ENCODE measurements at regions of chr5 and their contacts with region 1.

Region 1: DNA sequence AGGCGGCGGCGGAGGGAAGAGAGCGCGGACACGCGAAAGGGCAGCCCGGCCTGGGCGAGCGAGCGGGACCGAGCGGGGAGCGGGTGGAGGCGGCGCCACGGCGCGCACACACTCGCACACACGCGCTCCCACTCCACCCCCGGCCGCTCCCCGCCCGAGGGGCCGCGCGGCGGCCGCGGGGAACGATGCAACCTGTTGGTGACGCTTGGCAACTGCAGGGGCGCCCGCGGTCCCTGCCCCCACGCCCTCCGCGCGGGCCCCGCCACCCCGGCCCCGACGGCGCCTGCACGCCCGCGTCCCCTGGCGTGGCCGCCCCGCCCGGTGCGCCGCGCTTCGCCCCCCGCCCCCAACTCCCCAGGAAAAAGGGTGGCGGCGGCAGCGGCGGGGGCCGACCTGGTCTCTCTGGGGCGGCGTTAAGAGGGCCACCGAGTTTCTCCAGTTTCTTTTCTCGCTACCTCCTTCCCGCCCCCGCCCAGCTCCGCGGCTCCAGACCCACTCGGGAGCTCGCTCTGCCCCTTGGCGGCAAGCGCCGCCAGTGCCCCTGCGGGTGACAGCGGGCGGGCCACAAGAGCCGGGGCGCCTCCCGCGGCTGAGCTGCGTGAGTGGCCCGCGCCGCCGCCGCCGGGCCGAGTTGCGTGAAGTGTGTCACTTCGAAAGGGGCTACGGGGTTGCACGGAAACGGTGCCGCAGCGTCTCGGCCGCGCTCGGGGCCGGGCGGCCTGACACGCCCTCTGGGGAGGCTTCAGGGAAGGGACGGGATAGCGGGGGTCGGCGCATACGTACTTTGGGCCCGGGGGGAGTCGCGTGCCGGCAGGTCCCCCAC is at the start of gene NR3C1:
- DNase-seq: peak; percentile 78
- H3K4me3 ChIP-seq: peak within 1 kb of the TSS; percentile 64 to 94 (median 87)
- H3K27ac ChIP-seq: peak within 1 kb of the TSS; percentile 94
- H3K4me1 ChIP-seq: peaks cover 39% of the 10 kb centered on the region
- H3K27me3 ChIP-seq: no peaks in the 10 kb centered on the region
- CTCF ChIP-seq: peak; percentile 16 to 62
- POLR2A ChIP-seq: no peak
- total RNA-seq, gene NR3C1: 17.0 and 21.2 TPM in 2 replicates

Region 2: DNA sequence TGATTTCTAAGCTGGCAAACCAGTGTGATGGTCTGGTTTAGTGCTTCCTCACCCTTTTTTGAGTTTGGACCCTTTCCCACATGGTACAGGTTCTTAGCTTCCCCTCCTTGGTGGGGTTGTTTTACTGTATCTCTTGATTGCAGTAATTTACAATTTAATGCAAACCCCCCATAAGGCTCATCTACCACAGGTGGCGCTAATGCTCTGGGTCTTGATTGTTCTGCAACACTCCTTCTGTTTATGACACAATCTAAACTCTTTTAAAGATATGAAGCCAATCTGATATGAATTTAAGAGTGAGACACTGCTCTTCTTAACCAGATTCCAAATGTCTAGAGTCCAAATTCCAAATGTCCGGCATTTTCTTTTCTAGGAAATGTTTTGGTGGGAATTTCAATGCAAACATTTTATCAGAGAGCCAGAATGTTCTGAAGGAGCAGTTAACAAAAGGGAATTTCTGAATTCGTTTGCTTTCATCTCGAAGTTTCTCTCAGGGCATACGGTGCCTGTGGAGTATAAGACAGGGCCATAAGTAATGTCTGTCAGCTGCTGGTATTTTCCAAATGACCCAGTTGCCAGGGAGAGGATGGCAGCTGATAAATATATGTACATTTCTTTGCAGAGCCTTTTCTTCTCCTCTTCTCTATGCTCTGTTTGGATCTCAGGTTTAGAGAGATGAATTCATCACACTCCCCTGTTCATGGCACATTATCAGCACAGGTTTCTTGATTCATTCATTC is 386.9 kb before region 1 on chr5:
- CTCF ChIA-PET with region 1: interaction called, 6 read pairs
- POLR2A ChIA-PET with region 1: no interaction called
- dilution Hi-C with region 1: no loop called
- intact Hi-C with region 1: loop called (anchors 1 kb)
- DNase-seq: peak; percentile 67
- H3K4me3 ChIP-seq: no peak overlapping the region
- H3K27ac ChIP-seq: no peak overlapping the region
- H3K4me1 ChIP-seq: no peaks in the 10 kb centered on the region
- H3K27me3 ChIP-seq: no peaks in the 10 kb centered on the region
- CTCF ChIP-seq: peak; percentile 62 to 63
- POLR2A ChIP-seq: no peak

Region 3: GRCh38 chr5:143124593-143124992 is 279.2 kb before region 1 on chr5:
- CTCF ChIA-PET with region 1: interaction called, 21 read pairs
- POLR2A ChIA-PET with region 1: no interaction called
- dilution Hi-C with region 1: no loop called
- intact Hi-C with region 1: loop called (anchors 1 kb)
- DNase-seq: no peak
- H3K4me3 ChIP-seq: no peak overlapping the region
- H3K27ac ChIP-seq: no peak overlapping the region
- H3K4me1 ChIP-seq: peaks cover 16% of the 10 kb centered on the region
- H3K27me3 ChIP-seq: peaks cover 3 to 7% of the 10 kb centered on the region in 2 experiments
- CTCF ChIP-seq: no peak
- POLR2A ChIP-seq: no peak

Region 4: DNA sequence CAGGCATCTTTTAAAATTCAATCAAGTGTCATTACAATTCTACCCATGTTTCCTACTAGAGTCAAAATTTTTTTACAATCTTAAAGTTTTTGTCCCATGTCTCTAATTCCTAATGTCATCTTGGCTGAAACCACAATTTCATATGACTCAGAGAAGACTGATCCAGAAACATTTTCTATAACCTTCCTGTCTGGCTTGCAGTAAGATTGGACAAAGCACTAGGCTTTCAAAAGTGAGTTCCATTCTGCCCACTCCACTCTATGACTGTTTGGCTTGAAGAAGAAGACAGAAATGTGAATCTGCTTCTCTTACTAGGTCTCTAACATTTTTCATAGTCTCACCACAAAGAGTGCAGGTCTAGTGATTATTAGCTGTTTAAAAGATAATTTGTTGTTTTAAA is 89.1 kb before region 1 on chr5:
- CTCF ChIA-PET with region 1: interaction called, 8 read pairs
- POLR2A ChIA-PET with region 1: interaction called, 3 read pairs
- dilution Hi-C with region 1: no loop called
- intact Hi-C with region 1: loop called (anchors 2 kb)
- DNase-seq: peak; percentile 69
- H3K4me3 ChIP-seq: no peak overlapping the region
- H3K27ac ChIP-seq: peak overlapping the region; percentile 24
- H3K4me1 ChIP-seq: peaks cover 62% of the 10 kb centered on the region
- H3K27me3 ChIP-seq: no peaks in the 10 kb centered on the region
- CTCF ChIP-seq: no peak
- POLR2A ChIP-seq: no peak

Region 5: DNA sequence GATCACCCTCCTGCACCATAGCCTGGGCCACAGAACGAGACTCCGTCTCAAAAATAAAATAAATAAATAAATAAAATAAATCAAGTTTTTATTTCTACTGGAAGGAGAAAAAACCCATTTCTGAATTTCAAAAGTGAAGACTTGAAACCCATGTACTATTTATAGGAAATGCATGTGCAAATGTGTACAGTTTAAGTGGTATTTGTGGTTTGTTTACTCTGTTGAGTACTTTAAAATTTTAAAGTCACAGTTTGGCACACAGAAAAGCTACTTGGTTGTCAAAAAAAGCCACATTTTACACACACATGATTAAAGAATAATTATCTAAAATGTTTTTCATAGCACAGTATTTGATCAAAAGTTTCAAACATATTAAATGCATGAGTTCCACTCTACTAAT is 43.9 kb before region 1 on chr5:
- CTCF ChIA-PET with region 1: no interaction called
- POLR2A ChIA-PET with region 1: no interaction called
- dilution Hi-C with region 1: no loop called
- intact Hi-C with region 1: no loop called
- DNase-seq: no peak
- H3K4me3 ChIP-seq: no peak overlapping the region
- H3K27ac ChIP-seq: no peak overlapping the region
- H3K4me1 ChIP-seq: peaks cover 9% of the 10 kb centered on the region
- H3K27me3 ChIP-seq: no peaks in the 10 kb centered on the region
- CTCF ChIP-seq: no peak
- POLR2A ChIP-seq: no peak

Region 6: DNA sequence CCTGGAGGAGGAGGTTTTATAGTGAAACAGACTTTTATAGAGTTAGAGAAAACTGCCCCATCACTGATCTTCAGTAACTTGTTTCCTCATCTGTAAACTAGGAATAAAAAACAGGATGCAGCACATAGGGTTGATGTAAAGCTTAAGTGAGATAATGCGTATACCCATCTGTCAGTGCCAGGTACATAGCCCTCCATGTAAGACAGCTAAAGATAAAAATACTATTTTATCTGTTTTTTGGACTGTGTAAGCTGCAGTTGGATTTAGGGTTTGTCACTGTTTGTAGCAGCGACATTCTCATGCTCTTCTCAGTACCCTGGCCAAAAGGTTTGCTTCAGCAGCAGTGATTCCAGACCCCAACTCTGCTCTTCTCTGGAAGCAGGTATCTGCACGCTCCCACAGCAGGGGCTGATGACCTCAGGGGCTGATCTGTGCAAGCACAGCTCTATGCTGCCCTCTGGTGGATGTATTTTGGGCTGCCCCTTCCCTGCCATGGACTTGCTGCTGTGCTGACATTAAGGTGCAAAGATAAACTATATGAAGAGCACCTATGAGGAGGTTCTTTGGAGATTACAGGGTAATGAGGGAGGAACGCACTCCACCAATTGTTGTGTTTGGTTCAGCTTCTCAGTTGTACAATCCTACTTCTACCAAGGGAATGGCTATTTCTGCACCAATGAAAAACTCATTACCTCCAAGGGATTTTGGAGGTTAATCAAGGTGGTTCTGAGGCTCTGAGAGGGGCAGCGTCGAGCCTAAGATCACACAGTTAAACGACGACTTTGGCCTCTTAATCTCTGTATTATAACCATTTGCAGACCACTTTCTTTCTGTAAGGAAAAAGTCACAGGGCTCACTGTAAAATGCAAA is 421.3 kb after region 1 on chr5:
- CTCF ChIA-PET with region 1: interaction called, 28 read pairs
- POLR2A ChIA-PET with region 1: no interaction called
- dilution Hi-C with region 1: no loop called
- intact Hi-C with region 1: loop called (anchors 1 kb)
- DNase-seq: peak; percentile 83
- H3K4me3 ChIP-seq: no peak overlapping the region
- H3K27ac ChIP-seq: no peak overlapping the region
- H3K4me1 ChIP-seq: no peaks in the 10 kb centered on the region
- H3K27me3 ChIP-seq: peaks cover 0 to 2% of the 10 kb centered on the region in 2 experiments
- CTCF ChIP-seq: peak; percentile 84
- POLR2A ChIP-seq: no peak

Region 7: DNA sequence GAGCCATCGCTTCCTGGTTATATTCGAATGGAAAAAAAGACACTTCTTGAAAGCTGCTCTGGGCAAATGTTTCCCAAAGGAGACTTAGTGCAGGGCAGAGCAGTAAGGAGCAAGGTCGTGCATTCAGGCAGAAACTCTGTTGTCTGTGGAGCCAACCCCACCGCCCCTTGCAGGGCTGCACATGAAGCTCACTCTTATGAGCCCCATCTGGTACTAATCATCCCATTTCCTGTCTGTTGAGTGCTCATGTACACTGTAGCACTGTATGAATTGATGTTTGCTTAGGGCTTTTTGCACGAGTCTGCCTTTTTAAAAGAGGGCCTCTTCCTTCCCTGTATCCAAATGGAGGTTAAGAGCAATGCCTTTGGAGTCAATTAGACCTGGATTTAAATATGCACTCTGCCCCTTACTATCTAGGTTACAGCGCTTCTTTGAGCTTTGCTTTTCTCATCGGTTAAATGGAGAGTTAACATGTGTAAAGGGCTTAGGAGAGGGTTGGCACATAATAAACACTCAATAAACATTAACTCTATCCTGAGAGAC is 433.6 kb after region 1 on chr5:
- CTCF ChIA-PET with region 1: no interaction called
- POLR2A ChIA-PET with region 1: no interaction called
- dilution Hi-C with region 1: no loop called
- intact Hi-C with region 1: no loop called
- DNase-seq: no peak
- H3K4me3 ChIP-seq: no peak overlapping the region
- H3K27ac ChIP-seq: no peak overlapping the region
- H3K4me1 ChIP-seq: no peaks in the 10 kb centered on the region
- H3K27me3 ChIP-seq: no peaks in the 10 kb centered on the region
- CTCF ChIP-seq: no peak
- POLR2A ChIP-seq: no peak

Region 8: GRCh38 chr5:144183254-144183889 is 779.6 kb after region 1 on chr5:
- CTCF ChIA-PET with region 1: interaction called, 3 read pairs
- POLR2A ChIA-PET with region 1: no interaction called
- dilution Hi-C with region 1: no loop called
- intact Hi-C with region 1: loop called (anchors 1 kb)
- DNase-seq: peak; percentile 75
- H3K4me3 ChIP-seq: no peak overlapping the region
- H3K27ac ChIP-seq: peak overlapping the region; percentile 40
- H3K4me1 ChIP-seq: peaks cover 24% of the 10 kb centered on the region
- H3K27me3 ChIP-seq: no peaks in the 10 kb centered on the region
- CTCF ChIP-seq: peak; percentile 45 to 53
- POLR2A ChIP-seq: no peak

Measured in endothelial cell of umbilical vein (primary cell).